Dorsolateral prefrontal cortex (tissue), 120 donors: ENCODE measurements at regions of chr6 and their contacts with region 1.

Region 1: GRCh38 chr6:37691904-37692806 is 5.5 kb downstream of the MDGA1 start:
- DNase-seq: peak; percentile 65 to 89 (median 83)
- H3K4me3 ChIP-seq: peak overlapping the region in 2 of 59 donors; percentile 27 to 69
- H3K27ac ChIP-seq: peak overlapping the region in 38 of 59 donors; percentile 2 to 81 (median 52)
- H3K27me3 ChIP-seq: no peaks in the 10 kb centered on the region
- CTCF ChIP-seq: peak; percentile 79 to 99 (median 98)

Region 2: DNA sequence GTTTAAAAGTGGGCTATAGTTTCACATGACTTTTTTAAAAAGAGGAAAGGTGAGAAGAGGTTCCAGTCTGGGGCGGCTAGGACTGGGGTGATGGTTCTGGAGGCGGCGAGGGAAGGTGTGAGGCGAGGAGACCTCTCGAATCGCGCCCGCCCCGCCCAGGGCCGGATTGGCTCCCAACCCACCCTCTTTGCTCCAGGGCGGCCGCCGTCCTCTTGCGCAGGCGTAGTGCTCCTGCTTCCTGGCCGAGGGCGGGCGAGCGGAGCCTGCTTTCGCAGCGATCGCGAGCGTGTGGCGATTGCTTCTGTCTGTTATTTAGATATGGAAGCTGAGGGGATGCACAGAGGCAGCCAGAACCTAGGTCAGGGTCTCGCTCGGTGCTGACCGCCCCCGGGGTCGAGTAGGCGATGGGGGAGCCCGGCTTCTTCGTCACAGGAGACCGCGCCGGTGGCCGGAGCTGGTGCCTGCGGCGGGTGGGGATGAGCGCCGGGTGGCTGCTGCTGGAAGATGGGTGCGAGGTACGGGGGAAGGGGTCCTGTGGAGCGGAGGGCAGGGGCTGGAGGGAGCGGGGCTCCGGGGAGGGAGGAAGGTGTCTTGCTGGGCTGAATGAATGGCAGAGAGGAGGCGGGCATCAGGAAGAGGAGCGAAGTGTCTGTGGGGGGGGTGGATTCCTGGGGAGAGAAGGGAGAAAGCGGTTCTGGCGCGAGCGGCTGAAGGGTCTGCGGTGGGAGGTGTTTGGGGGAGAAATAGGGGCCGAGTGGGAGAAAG is 338.2 kb before region 1 on chr6 and contains the start of gene RNF8:
- intact Hi-C with region 1: loop called in 1 of 2 experiments (anchors 10 kb)
- DNase-seq: peak; percentile 80 to 93 (median 88)
- H3K4me3 ChIP-seq: peak within 1 kb of the TSS; percentile 59 to 94 (median 82)
- H3K27ac ChIP-seq: peak within 1 kb of the TSS in 45 of 59 donors; percentile 1 to 89 (median 64)
- H3K27me3 ChIP-seq: no peaks in the 10 kb centered on the region
- CTCF ChIP-seq: peak in 14 of 56 donors; percentile 3 to 38 (median 24)
- total RNA-seq, gene RNF8: 16.3 to 45.3 (median 30.9) TPM

Region 3: GRCh38 chr6:37381579-37381978 is 310.6 kb before region 1 on chr6:
- intact Hi-C with region 1: loop called in 1 of 2 experiments (anchors 5 kb)
- DNase-seq: no peak
- H3K4me3 ChIP-seq: no peak overlapping the region
- H3K27ac ChIP-seq: no peak overlapping the region
- H3K27me3 ChIP-seq: no peaks in the 10 kb centered on the region
- CTCF ChIP-seq: peak in 55 of 56 donors; percentile 30 to 68 (median 54)

Region 4: DNA sequence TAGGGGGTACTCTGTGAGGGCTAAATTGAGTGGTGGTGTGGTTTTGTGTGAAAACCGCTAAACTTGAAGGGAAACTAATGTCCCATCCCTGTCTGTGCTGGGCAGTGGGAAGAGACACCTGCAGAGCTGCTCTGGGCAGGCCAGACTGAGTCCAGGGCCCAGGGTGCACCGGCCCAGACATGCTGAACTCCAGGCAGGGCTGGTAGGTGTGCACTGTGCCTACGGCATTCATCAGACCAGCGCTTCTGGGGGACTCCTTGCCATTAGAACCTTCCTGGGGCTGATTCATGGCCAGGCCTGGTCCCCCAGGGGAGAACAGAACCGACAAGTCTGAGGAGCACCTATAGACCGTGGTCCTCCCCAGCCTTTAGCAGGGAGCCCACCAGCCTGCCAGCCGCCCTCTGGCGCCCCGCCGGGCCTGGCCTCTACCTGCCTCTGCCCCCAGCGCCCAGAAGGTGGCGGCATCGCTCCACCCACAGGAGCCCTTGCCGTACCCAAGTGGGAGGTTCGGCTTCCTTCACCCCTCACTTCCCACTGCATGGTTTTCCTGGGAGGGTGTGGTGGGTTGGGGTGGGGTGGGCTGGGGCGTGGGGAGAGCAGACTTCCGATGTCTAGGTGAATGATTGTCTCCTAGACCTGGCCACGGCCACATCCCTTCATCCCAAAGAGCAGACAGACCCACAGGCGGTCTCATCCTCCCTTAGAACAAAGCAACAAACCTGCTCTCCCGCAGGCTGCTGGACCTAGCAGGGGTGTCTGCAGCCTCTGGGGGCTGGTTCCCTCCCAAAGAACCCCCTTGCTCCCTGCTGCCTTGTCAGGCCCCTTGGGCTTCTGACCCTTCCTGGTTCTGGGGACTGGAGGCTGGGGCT is 208.0 kb before region 1 on chr6:
- intact Hi-C with region 1: loop called (anchors 1 to 2 kb)
- DNase-seq: peak; percentile 57 to 83 (median 66)
- H3K4me3 ChIP-seq: no peak overlapping the region
- H3K27ac ChIP-seq: peak overlapping the region in 3 of 59 donors; percentile 2 to 34 (median 3)
- H3K27me3 ChIP-seq: no peaks in the 10 kb centered on the region
- CTCF ChIP-seq: peak; percentile 26 to 89 (median 77)

Region 5: GRCh38 chr6:37588735-37589108 is 103.4 kb before region 1 on chr6:
- intact Hi-C with region 1: no loop called
- DNase-seq: no peak
- H3K4me3 ChIP-seq: no peak overlapping the region
- H3K27ac ChIP-seq: peak overlapping the region in 18 of 59 donors; percentile 3 to 84 (median 56)
- H3K27me3 ChIP-seq: no peaks in the 10 kb centered on the region
- CTCF ChIP-seq: no peak

Region 6: GRCh38 chr6:37607944-37608343 is 84.2 kb before region 1 on chr6:
- intact Hi-C with region 1: loop called (anchors 2 to 5 kb)
- DNase-seq: no peak
- H3K4me3 ChIP-seq: no peak overlapping the region
- H3K27ac ChIP-seq: peak overlapping the region in 2 of 59 donors; percentile 12 to 41
- H3K27me3 ChIP-seq: no peaks in the 10 kb centered on the region
- CTCF ChIP-seq: peak in 55 of 56 donors; percentile 15 to 73 (median 54)